Dendritic cell treated with granulocyte-macrophage colony-stimulating factor and Interleukin-4, amounts not matched to agents 40 ng/mL and 50 ng/mL, for 4 days (primary cell): ENCODE measurements at regions of chr1 and their contacts with region 1.

Region 1: GRCh38 chr1:244835276-244836134 is at the start of gene COX20:
- H3K4me3 Mint-ChIP-seq: peak within 1 kb of the TSS; percentile 95
- H3K27ac Mint-ChIP-seq: peak within 1 kb of the TSS; percentile 99
- H3K4me1 Mint-ChIP-seq: peaks cover 33% of the 10 kb centered on the region
- H3K27me3 Mint-ChIP-seq: no peaks in the 10 kb centered on the region

Region 2: GRCh38 chr1:244815600-244816099 is 19.9 kb before region 1 on chr1:
- intact Hi-C with region 1: loop called (anchors 2 kb)
- H3K4me3 Mint-ChIP-seq: peak overlapping the region; percentile 87
- H3K27ac Mint-ChIP-seq: peak overlapping the region; percentile 99
- H3K4me1 Mint-ChIP-seq: peaks cover 33% of the 10 kb centered on the region
- H3K27me3 Mint-ChIP-seq: no peaks in the 10 kb centered on the region

Region 3: DNA sequence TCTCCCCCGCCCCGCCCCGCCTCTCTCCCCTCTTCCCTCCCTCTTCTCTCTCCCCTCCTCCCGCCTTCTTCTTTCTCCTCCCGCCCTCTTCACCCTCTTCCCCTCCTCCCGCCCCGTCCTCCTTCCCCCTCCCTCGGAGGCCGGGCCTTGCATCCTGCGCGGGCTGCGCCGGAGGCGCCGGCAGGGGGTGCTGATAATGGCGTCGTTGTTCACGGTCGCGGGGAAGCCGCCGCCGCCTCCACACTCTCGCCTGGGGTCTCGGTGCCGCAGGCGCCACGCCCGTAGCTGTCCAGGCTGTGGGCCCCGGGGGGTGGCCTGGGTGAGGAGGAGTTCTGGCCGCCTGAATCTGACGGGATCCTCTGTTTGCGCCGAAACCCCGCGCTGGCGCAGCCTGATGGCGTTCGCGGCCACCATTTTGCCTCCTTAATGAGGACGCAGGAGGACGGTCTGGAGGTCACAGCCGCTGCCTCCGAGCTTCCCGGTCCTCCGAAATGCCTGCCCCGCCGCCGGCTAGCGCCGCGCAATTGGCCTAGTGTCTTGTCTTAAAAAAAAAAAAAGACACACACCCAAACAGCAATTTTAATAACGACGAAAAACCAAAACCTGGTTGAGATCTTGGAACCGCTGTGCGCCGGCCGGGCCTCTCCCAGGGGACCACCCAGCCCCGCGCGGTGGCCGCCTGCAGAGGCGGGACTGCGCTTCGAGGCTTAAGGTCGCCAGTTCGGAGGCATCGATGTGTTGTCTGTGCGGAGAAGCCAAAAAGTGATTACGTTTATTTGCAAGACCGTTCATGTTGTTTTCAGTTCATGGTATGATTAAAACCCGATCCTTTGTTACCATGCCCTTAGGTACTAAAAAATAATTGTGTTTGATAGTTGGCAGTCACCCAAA is 135.4 kb after region 1 on chr1:
- intact Hi-C with region 1: loop called (anchors 1 kb)
- H3K4me3 Mint-ChIP-seq: peak overlapping the region; percentile 87
- H3K27ac Mint-ChIP-seq: peak overlapping the region; percentile 99
- H3K4me1 Mint-ChIP-seq: peaks cover 17% of the 10 kb centered on the region
- H3K27me3 Mint-ChIP-seq: no peaks in the 10 kb centered on the region